Activated T-helper 1 cell treated with anti-CD3 and anti-CD28 coated beads, Interleukin-12 subunit alpha, Interleukin-12 subunit beta, Interleukin-2, Interleukin-4 antibody, amounts not matched to agents 30 ng/mL and 10 ng/mL and 1 ng/mL, durations not matched to agents 14 hours and 24 hours and 36 hours (primary cell): ENCODE measurements at regions of chr11 and their contacts with region 1.

Region 1: GRCh38 chr11:118304568-118305248 is at the start of gene CD3E:
- DNase-seq: peak; percentile 60
- H3K4me3 Mint-ChIP-seq: peak within 1 kb of the TSS; percentile 99
- H3K27ac Mint-ChIP-seq: peak within 1 kb of the TSS; percentile 98
- H3K4me1 Mint-ChIP-seq: peaks cover 62% of the 10 kb centered on the region
- H3K27me3 Mint-ChIP-seq: no peaks in the 10 kb centered on the region
- total RNA-seq, gene CD3E: 630 and 646 TPM in 2 replicates

Region 2: DNA sequence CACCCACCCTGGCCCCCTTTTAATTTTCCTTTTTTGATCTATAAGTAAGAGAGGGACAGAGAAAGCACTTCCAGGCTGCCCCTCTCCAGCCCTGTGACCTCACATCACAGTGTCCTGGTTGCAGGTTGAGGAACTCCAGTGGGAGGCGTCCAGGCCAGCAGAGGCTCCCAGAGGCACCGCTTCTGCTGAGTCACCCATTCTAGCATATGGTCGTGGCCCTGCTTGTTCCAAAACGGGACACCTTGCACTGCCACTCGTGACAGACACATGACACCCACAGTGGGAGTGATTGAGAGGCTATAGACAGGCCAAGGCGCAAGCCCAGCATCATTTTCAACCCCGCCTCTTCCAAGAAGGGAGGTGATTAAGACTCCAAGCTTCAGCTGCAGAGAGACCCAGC is 243.8 kb before region 1 on chr11:
- intact Hi-C with region 1: no loop called
- DNase-seq: no peak
- H3K4me3 Mint-ChIP-seq: no peak overlapping the region
- H3K27ac Mint-ChIP-seq: no peak overlapping the region
- H3K4me1 Mint-ChIP-seq: peaks cover 9% of the 10 kb centered on the region
- H3K27me3 Mint-ChIP-seq: peaks cover 9% of the 10 kb centered on the region

Region 3: GRCh38 chr11:118240999-118241768 is 63.5 kb before region 1 on chr11:
- intact Hi-C with region 1: loop called (anchors 1 kb)
- DNase-seq: peak; percentile 66
- H3K4me3 Mint-ChIP-seq: peak overlapping the region; percentile 83
- H3K27ac Mint-ChIP-seq: peak overlapping the region; percentile 99
- H3K4me1 Mint-ChIP-seq: peaks cover 89% of the 10 kb centered on the region
- H3K27me3 Mint-ChIP-seq: no peaks in the 10 kb centered on the region

Region 4: GRCh38 chr11:118338637-118339061 is 33.9 kb after region 1 on chr11:
- intact Hi-C with region 1: loop called (anchors 1 kb)
- DNase-seq: peak; percentile 86
- H3K4me3 Mint-ChIP-seq: peak overlapping the region; percentile 90
- H3K27ac Mint-ChIP-seq: peak overlapping the region; percentile 99
- H3K4me1 Mint-ChIP-seq: peaks cover 68% of the 10 kb centered on the region
- H3K27me3 Mint-ChIP-seq: no peaks in the 10 kb centered on the region

Region 5: DNA sequence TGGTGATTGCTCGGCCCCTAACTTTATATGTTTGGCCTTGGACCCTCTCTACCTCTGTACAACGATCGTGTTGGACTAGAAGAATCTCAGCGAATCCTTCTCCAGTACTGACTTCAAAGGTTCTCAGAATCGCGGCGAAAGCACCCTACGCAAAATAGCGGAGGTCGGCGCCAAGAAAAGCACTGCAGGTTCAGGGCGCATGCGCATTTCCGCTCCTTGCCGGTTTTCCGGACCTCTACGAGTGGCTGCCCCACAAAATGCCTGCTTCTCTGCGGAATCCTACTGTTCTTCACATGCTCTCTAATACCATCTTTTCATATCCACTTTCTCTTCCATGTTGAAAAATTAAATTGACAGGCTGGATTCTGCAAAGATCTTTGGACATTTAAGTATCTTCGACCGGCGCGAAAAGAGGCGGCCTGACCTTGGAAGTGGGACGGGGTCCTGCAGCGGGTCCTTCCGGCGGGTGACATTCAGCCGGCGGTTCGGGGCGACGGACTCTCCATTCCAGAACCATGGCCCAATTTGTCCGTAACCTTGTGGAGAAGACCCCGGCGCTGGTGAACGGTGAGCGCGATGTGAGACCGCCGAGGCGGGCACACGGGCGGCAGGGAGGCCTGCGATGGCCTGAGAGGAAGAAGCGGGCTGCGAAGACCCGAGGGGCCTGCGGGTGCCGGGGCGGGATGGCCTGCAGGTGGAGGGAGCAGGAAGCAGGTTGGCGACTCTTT is 96.6 kb after region 1 on chr11 and contains the start of gene ATP5MG:
- intact Hi-C with region 1: loop called (anchors 1 kb)
- DNase-seq: peak; percentile 87
- H3K4me3 Mint-ChIP-seq: peak within 1 kb of the TSS; percentile 93
- H3K27ac Mint-ChIP-seq: peak within 1 kb of the TSS; percentile 96
- H3K4me1 Mint-ChIP-seq: peaks cover 68% of the 10 kb centered on the region
- H3K27me3 Mint-ChIP-seq: no peaks in the 10 kb centered on the region
- total RNA-seq, gene ATP5MG: 205 and 216 TPM in 2 replicates

Region 6: GRCh38 chr11:118565051-118565450 is 260.3 kb after region 1 on chr11:
- intact Hi-C with region 1: loop called (anchors 5 kb)
- DNase-seq: no peak
- H3K4me3 Mint-ChIP-seq: peak overlapping the region; percentile 81
- H3K27ac Mint-ChIP-seq: peak overlapping the region; percentile 29
- H3K4me1 Mint-ChIP-seq: peaks cover 7% of the 10 kb centered on the region
- H3K27me3 Mint-ChIP-seq: peaks cover 2% of the 10 kb centered on the region